Activated CD4-positive, alpha-beta T cell treated with anti-CD3 and anti-CD28 coated beads for 36 hours (primary cell): ENCODE measurements at regions of chr4 and their contacts with region 1.

Region 1: GRCh38 chr4:158722917-158723793 is at the start of gene PPID:
- DNase-seq: peak; percentile 93
- ATAC-seq: peak; percentile 86
- H3K4me3 Mint-ChIP-seq: peak within 1 kb of the TSS; percentile 99
- H3K27ac Mint-ChIP-seq: peak within 1 kb of the TSS; percentile 100
- H3K4me1 Mint-ChIP-seq: peaks cover 46% of the 10 kb centered on the region
- H3K27me3 Mint-ChIP-seq: peaks cover 4% of the 10 kb centered on the region
- total RNA-seq, gene PPID: 72.0 to 78.1 TPM

Region 2: GRCh38 chr4:158768555-158769174 is 45.5 kb after region 1 on chr4 and contains the start of gene FNIP2:
- CTCF ChIA-PET with region 1: interaction called, 4 read pairs
- POLR2A ChIA-PET with region 1: interaction called, 3 read pairs
- intact Hi-C with region 1: loop called (anchors 1 to 2 kb)
- DNase-seq: peak; percentile 81
- ATAC-seq: peak; percentile 81
- H3K4me3 Mint-ChIP-seq: peak within 1 kb of the TSS; percentile 97
- H3K27ac Mint-ChIP-seq: peak within 1 kb of the TSS; percentile 93
- H3K4me1 Mint-ChIP-seq: peaks cover 41% of the 10 kb centered on the region
- H3K27me3 Mint-ChIP-seq: no peaks in the 10 kb centered on the region
- total RNA-seq, gene FNIP2: 11.6 to 13.0 TPM

Region 3: DNA sequence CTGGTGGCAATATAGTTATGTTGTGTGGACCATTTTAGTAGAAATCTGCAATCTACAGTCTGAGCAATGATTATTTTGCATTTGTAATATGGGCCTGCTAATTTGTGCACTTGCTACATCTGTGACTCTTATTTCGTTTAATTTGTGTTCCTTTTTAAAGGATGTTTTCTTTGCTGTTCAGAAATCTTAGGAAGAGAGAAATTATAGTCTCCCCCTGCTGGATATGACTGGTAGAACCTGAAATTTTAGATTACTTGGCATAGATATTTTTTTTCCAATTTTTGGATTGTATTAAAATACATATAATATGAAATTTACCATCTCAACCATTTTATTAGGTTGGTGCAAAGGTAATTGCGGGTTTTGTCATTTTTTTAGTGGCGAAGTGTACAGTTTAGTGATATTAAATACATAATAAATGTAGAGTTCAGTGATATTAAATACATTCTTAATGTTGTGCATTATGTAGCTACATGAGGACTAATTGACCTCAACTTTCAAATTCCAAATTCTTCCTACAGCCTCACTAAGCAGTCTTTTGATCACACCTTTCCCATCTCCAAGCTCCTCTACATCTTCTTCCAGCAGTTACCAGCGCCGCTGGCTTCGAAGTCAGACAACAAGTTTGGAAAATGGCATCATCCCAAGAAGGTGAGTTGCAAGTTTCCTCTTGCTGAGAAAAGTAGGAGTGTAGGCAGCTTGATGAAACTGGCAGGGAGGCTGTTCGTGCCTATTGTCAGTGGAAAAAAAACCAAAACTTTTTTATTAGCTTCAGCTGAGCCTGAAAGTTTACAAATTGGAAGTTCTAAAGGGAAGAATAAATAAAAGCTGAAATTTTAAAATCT is 127.9 kb after region 1 on chr4:
- CTCF ChIA-PET with region 1: interaction called, 4 read pairs
- POLR2A ChIA-PET with region 1: no interaction called
- intact Hi-C with region 1: loop called in 1 of 2 experiments (anchors 2 kb)
- DNase-seq: no peak
- ATAC-seq: no peak
- H3K4me3 Mint-ChIP-seq: no peak overlapping the region
- H3K27ac Mint-ChIP-seq: no peak overlapping the region
- H3K4me1 Mint-ChIP-seq: peaks cover 11% of the 10 kb centered on the region
- H3K27me3 Mint-ChIP-seq: no peaks in the 10 kb centered on the region

Region 4: GRCh38 chr4:158936238-158936637 is 213.1 kb after region 1 on chr4:
- CTCF ChIA-PET with region 1: no interaction called
- POLR2A ChIA-PET with region 1: no interaction called
- intact Hi-C with region 1: no loop called
- DNase-seq: no peak
- ATAC-seq: no peak
- H3K4me3 Mint-ChIP-seq: no peak overlapping the region
- H3K27ac Mint-ChIP-seq: no peak overlapping the region
- H3K4me1 Mint-ChIP-seq: no peaks in the 10 kb centered on the region
- H3K27me3 Mint-ChIP-seq: peaks cover 6% of the 10 kb centered on the region

Region 5: DNA sequence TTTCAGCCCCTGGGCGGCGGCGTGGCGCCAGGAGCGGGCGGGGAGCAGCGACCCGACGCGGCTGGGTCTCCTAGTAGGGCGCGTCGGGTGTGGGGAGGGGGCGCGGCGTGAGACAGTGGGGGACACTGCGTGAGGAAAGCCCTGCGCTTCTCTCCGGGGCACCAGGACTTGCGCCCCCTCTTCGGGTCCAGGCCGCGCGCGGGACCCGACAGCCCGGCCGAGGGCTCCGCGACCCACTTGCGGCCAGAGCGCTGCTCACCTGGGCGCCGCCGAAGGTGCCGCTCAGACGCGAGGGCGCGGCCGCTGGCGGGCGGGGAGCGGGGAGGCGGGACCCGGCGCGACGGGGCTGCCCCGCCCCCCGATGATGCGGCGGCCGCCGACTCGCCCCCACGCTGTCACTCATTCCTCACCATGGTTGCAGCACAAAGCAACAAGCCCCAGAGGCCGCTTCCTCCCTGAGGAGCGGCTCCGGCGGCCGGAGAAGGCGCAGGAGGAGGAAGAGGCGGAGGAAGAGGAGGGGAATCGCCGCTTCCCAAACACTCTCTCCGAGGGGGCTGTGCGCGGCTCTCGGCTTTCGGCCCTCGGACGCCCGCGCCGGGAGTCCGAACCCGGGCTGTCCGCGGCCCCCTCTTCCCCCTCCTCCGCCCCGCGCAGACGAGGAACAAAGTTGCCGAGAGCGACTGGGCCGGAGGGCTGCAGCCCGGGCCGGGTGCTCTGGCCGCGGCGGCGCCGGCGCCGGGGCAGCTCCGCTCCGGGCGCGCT is 379.6 kb after region 1 on chr4 and contains the start of gene RAPGEF2:
- CTCF ChIA-PET with region 1: no interaction called
- POLR2A ChIA-PET with region 1: no interaction called
- intact Hi-C with region 1: loop called (anchors 1 to 5 kb)
- DNase-seq: peak; percentile 94
- ATAC-seq: peak; percentile 83
- H3K4me3 Mint-ChIP-seq: peak within 1 kb of the TSS; percentile 73
- H3K27ac Mint-ChIP-seq: peak within 1 kb of the TSS; percentile 70
- H3K4me1 Mint-ChIP-seq: peaks cover 49% of the 10 kb centered on the region
- H3K27me3 Mint-ChIP-seq: peaks cover 2% of the 10 kb centered on the region
- total RNA-seq, gene RAPGEF2: 18.5 to 20.2 TPM

Region 6: DNA sequence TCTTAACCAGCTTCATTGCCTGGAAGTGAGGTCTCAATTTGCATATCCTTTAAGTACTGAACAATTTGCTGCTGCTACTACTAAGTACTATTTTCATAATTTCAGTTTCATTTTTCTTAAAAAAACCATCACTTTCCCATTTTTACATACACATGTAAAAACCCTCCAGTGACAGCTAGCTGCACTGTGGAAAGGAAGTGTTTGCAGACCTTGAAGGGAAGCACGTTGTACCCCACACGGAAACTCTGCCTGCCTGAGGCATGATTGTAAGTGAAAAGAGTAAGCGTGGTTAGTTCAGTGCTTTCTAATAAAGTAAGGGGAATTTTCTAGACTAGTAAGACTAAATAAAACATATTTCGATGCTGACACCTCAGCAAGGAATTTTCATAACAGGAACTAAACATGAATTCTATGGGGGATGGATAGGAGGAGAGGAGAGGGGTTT is 483.3 kb after region 1 on chr4:
- CTCF ChIA-PET with region 1: interaction called, 3 read pairs
- POLR2A ChIA-PET with region 1: no interaction called
- intact Hi-C with region 1: loop called (anchors 1 to 2 kb)
- DNase-seq: peak; percentile 76
- ATAC-seq: peak; percentile 94
- H3K4me3 Mint-ChIP-seq: peak overlapping the region; percentile 62
- H3K27ac Mint-ChIP-seq: peak overlapping the region; percentile 89
- H3K4me1 Mint-ChIP-seq: peaks cover 52% of the 10 kb centered on the region
- H3K27me3 Mint-ChIP-seq: no peaks in the 10 kb centered on the region